ENCODE measurements at regions of chr4 and their contacts with region 1.

Region 1: GRCh38 chr4:56066493-56066892 is 117.7 kb downstream of the CEP135 start:
- DNase-seq: no peak
- H3K27ac ChIP-seq: no peak overlapping the region
- CTCF ChIP-seq: no peak

Region 2: DNA sequence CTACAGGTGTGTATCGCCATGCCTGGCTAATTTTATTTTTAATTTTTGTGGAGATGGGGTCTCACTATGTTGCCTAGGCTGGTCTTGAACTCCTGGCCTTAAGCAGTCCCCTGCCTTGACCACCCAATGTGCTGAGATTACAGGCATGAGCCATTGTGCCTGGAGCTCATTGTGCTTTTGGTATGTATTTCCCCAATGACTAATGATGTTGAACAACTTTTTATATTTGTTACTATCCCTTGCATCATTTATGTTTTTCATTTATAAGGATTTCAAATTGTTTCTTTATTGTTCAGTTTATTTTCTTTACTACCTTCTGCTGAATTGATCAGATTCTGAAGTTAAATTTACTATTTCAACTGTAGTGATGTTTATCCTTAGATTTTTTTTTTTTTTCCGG is 81.9 kb after region 1 on chr4:
- CTCF ChIA-PET with region 1: interaction called, 13 read pairs
- POLR2A ChIA-PET with region 1: no interaction called
- DNase-seq: no peak
- H3K27ac ChIP-seq: no peak overlapping the region
- CTCF ChIP-seq: no peak

Region 3: DNA sequence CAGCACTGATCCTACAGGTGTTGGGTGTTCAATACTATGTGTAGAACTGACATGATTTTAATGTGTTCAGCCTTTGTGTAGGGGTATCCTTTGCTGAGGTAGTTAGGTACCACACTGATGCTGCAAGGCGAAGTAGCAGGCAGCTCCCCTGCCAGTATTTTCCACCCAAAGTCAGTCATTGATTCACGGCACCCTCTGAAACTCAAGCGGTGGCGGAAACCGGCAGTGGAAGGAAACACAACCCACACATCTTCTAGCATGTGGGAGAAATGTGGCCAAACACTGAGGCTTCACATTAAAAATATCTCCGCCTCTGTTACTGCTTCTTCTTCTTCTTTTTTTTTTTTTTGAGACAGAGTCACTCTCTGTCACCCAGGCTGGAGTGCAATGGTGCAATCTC is 194.5 kb after region 1 on chr4:
- CTCF ChIA-PET with region 1: no interaction called
- POLR2A ChIA-PET with region 1: no interaction called
- DNase-seq: no peak
- H3K27ac ChIP-seq: no peak overlapping the region
- CTCF ChIP-seq: no peak